ENCODE measurements at regions of chr9 and their contacts with region 1.

Region 1: DNA sequence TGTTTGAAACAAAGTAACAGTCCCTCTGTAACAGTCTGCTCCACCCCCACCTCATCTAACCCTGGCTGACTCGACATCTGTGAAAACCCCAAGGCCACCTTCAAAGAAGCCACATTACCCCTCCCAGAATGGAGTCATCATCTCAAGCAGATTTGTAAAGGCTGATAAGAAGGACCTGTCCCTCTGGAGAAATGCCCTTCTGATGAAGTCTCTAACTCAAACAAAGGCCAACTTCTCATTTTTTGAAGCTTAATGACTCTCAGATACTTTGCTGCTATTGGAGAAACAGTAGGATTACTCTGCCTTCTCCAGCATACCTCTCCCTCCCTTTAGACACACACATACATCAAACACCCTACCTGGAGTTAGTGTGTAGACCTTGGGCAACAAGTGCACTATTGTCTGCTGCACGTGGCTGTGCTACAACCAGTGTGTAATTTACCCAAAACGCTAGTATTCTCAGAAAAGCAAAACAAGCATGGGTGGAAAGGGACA is 5.3 kb upstream of the SUSD1 start:
- DNase-seq: peak; percentile 81
- H3K4me3 Mint-ChIP-seq: no peak overlapping the region
- H3K27ac Mint-ChIP-seq: peak overlapping the region; percentile 1
- H3K4me1 Mint-ChIP-seq: peaks cover 32% of the 10 kb centered on the region
- H3K27me3 Mint-ChIP-seq: peaks cover 20% of the 10 kb centered on the region

Region 2: GRCh38 chr9:111916234-111916645 is 264.2 kb before region 1 on chr9:
- CTCF ChIA-PET with region 1: no interaction called
- intact Hi-C with region 1: no loop called
- DNase-seq: peak; percentile 45
- H3K4me3 Mint-ChIP-seq: no peak overlapping the region
- H3K27ac Mint-ChIP-seq: peak overlapping the region; percentile 81
- H3K4me1 Mint-ChIP-seq: peaks cover 53% of the 10 kb centered on the region
- H3K27me3 Mint-ChIP-seq: no peaks in the 10 kb centered on the region

Region 3: DNA sequence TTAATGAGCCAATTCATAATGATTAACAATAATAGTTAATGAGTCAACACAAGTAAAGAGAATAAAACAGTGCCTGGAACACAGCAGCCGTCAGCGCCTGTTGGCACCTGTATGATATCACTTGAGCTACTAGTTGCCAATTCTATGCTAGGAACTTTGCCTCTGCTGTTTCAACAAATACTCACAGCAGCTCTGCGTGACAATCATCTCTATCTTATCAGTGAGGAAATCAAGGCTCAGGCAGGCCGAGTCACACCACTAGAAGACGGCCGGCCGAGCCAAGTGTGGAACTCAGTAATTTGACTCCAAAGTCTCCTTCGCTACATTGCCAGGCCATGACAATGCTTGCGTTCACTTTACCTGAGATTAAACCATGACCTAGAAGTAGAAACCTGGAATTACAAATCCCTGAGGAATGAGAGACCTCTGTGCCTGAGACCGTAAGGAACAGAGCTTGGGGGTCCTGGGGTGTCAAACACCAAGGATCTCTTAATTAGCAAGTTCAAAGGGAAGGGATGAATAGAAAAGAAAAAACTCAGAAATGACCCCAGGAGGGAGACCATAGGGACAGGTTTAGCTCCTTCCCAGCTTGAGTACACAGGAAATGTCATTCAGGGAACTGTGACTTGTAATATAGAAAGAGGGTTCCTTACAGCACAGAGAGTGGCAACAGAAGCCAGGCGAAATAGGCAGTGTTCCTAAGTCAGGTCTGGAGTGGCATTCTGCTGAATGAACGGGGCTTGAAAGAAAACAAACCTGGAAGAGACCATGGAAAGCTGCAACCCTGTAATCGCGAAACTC is 114.4 kb before region 1 on chr9:
- CTCF ChIA-PET with region 1: no interaction called
- intact Hi-C with region 1: no loop called
- DNase-seq: no peak
- H3K4me3 Mint-ChIP-seq: no peak overlapping the region
- H3K27ac Mint-ChIP-seq: no peak overlapping the region
- H3K4me1 Mint-ChIP-seq: peaks cover 9% of the 10 kb centered on the region
- H3K27me3 Mint-ChIP-seq: no peaks in the 10 kb centered on the region

Region 4: GRCh38 chr9:112119225-112120029 is 61.0 kb before region 1 on chr9:
- CTCF ChIA-PET with region 1: no interaction called
- intact Hi-C with region 1: loop called (anchors 2 kb)
- DNase-seq: no peak
- H3K4me3 Mint-ChIP-seq: no peak overlapping the region
- H3K27ac Mint-ChIP-seq: no peak overlapping the region
- H3K4me1 Mint-ChIP-seq: peaks cover 12% of the 10 kb centered on the region
- H3K27me3 Mint-ChIP-seq: no peaks in the 10 kb centered on the region

Region 5: DNA sequence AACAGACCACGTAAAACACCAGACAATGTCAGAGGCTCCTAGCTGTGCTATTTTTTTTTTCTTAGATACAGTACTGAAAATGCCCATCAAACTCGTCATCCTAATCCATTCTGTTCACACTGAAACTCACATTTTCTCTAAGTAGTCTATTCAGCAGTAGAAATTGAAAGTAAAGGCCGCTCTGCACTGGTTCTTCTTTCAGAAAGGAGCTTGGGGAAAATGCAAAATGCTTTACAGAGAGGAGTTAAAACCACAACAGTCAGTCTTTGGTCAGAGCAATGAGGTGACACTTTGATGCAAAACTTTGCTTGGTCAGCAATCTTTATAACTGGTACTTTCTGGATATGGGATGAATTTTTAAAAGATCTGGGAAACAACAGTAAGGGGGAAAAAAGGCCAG is 38.5 kb after region 1 on chr9:
- CTCF ChIA-PET with region 1: no interaction called
- intact Hi-C with region 1: loop called (anchors 2 kb)
- DNase-seq: peak; percentile 11
- H3K4me3 Mint-ChIP-seq: no peak overlapping the region
- H3K27ac Mint-ChIP-seq: no peak overlapping the region
- H3K4me1 Mint-ChIP-seq: peaks cover 22% of the 10 kb centered on the region
- H3K27me3 Mint-ChIP-seq: no peaks in the 10 kb centered on the region

Measured in activated naive CD4-positive, alpha-beta T cell treated with anti-CD3 and anti-CD28 coated beads for 36 hours (primary cell).